Activated CD8-positive, alpha-beta memory T cell treated with anti-CD3 and anti-CD28 coated beads, Interleukin-2, amount 10 ng/mL, durations not matched to agents 7 days and 5 days (primary cell): ENCODE measurements at regions of chr14 and their contacts with region 1.

Region 1: GRCh38 chr14:30375296-30375892 is 183.6 kb upstream of the G2E3 start:
- DNase-seq: peak; percentile 75
- ATAC-seq: peak; percentile 70
- H3K4me3 Mint-ChIP-seq: no peak overlapping the region
- H3K27ac Mint-ChIP-seq: no peak overlapping the region
- H3K4me1 Mint-ChIP-seq: no peaks in the 10 kb centered on the region
- H3K27me3 Mint-ChIP-seq: peaks cover 18% of the 10 kb centered on the region

Region 2: DNA sequence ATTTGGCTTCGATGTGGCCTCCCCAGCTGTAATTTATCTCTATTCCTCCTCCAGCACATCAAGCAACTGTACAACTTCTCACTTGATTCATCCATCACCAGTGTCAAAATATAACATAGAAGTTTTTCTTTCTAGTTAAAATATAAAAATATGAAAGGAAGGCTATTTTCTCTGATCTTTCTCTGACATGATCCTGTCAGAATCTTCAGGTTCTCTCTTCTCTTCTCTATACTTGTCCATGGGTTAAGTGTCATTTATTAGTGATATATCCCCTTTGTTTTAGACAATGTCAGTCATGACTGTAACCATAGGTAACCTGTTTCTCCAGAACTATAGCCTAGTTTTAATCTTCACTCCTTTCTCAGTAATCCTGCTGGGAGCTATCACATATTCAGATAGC is 51.1 kb after region 1 on chr14:
- CTCF ChIA-PET with region 1: no interaction called
- DNase-seq: no peak
- ATAC-seq: no peak
- H3K4me3 Mint-ChIP-seq: no peak overlapping the region
- H3K27ac Mint-ChIP-seq: no peak overlapping the region
- H3K4me1 Mint-ChIP-seq: no peaks in the 10 kb centered on the region
- H3K27me3 Mint-ChIP-seq: peaks cover 7% of the 10 kb centered on the region

Region 3: DNA sequence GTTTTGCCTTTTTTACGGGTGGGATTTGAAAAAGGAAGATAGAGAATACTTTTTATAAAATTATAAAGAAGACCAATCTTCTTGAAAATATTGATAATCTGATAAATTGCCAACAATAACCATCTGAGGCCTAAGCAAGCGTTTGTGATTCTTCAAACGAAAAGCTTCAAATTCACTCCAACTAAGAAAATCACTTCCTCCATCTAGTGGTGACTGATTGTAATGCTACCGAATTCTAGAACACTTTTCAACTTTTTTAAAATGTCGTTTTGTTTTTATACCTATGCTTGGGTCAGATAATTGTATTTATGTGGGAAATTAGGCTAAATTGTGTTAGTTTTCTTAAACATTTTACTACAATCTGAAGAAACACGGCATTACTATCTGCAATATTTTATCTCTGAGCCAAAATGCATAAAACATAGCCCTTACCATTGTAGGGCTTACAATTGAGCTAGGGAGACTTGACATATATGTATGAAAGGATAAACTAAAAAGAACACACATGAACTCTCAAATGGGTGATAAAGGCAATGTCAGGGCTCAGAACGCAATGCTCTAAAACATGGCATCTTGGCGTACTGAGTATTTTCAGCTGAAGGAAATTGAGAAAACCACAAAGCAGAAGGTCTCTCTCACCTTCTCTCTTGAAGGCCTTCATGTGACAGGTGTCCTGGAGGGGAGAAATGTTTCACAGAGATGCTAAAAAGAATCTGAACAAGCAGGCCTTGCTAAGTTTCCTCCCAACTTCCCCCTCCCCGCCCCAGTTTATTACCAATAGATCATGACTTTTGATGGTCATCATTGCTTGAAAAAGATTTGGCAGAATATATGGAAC is 146.7 kb after region 1 on chr14:
- CTCF ChIA-PET with region 1: interaction called, 18 read pairs
- DNase-seq: no peak
- ATAC-seq: no peak
- H3K4me3 Mint-ChIP-seq: no peak overlapping the region
- H3K27ac Mint-ChIP-seq: no peak overlapping the region
- H3K4me1 Mint-ChIP-seq: peaks cover 9% of the 10 kb centered on the region
- H3K27me3 Mint-ChIP-seq: no peaks in the 10 kb centered on the region